SK-N-SH (cell line): ENCODE measurements at regions of chr12 and their contacts with region 1.

Region 1: GRCh38 chr12:97321621-97322020 is 141.0 kb upstream of the RMST start:
- DNase-seq: no peak
- H3K4me3 ChIP-seq: no peak overlapping the region
- H3K27ac ChIP-seq: no peak overlapping the region
- H3K4me1 ChIP-seq: no peaks in the 10 kb centered on the region; a peak in 1 of 4 replicates
- H3K27me3 ChIP-seq: no peaks in the 10 kb centered on the region
- CTCF ChIP-seq: no peak
- EP300 ChIP-seq: no peak
- RAD21 ChIP-seq: no peak

Region 2: DNA sequence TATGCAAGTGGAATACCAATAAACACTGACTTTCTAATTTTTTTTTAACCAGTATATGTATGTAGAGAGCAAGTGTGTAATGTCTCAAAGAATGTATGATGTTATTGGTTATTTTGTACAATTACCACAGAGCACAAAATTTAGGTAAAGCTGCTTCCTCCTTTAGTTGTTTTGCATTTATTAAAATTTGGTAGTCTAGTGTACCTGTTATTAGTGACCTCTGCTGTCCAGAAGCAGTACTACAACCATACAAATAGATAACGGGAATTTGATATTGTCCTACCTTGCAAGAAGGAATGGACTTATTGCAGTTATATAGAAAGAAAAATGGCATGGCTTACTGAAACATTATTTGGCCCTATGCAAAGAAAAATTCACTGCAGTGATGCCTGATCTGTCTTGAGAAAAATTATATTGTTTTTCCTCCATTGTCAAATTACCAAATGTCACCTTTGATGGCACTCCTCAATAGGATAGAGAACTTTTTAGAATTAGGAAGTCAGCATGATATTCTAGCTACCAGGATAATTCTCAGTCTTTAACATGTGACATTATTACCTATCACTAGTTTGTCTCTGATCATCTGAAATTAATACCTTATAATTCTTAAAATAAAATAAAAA is 12.9 kb before region 1 on chr12:
- CTCF ChIA-PET with region 1: interaction called, 25 read pairs
- POLR2A ChIA-PET with region 1: no interaction called
- DNase-seq: no peak
- H3K4me3 ChIP-seq: no peak overlapping the region
- H3K27ac ChIP-seq: no peak overlapping the region
- H3K4me1 ChIP-seq: peaks cover 0 to 7% of the 10 kb centered on the region in 2 experiments; a peak in 2 of 4 replicates
- H3K27me3 ChIP-seq: no peaks in the 10 kb centered on the region
- CTCF ChIP-seq: peak; percentile 75
- EP300 ChIP-seq: no peak
- RAD21 ChIP-seq: peak; percentile 70

Region 3: GRCh38 chr12:97359021-97359690 is 37.5 kb after region 1 on chr12:
- CTCF ChIA-PET with region 1: no interaction called
- POLR2A ChIA-PET with region 1: no interaction called
- DNase-seq: no peak
- H3K4me3 ChIP-seq: no peak overlapping the region
- H3K27ac ChIP-seq: no peak overlapping the region
- H3K4me1 ChIP-seq: no peaks in the 10 kb centered on the region
- H3K27me3 ChIP-seq: no peaks in the 10 kb centered on the region
- CTCF ChIP-seq: no peak
- EP300 ChIP-seq: no peak
- RAD21 ChIP-seq: no peak